ENCODE measurements at regions of chr1 and their contacts with region 1.

Region 1: DNA sequence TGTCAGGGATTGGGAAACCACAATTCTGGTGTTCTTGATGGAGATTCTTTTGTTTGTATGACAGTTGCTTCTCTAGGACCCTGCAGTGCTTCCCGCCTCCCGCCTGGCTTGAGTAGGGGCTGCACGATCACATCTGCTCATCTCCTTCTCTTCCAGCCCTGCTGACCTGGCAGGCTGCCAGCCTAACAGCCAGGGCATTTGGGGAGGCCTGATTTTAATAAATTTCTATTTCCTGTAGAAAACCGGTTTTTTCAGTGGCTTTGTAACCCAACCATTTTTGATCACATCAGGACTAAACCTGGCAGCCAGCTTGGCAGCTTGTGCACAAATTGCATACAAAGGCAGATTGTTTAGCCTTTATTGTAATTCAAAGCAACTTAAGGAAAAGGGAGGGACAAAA is 78.9 kb downstream of the UBE2U start:
- DNase-seq: no peak
- ATAC-seq: no peak
- H3K4me3 ChIP-seq: no peak overlapping the region
- H3K4me3 Mint-ChIP-seq: no peak overlapping the region
- H3K27ac ChIP-seq: no peak overlapping the region
- H3K27ac Mint-ChIP-seq: no peak overlapping the region
- H3K4me1 ChIP-seq: no peaks in the 10 kb centered on the region
- H3K4me1 Mint-ChIP-seq: no peaks in the 10 kb centered on the region
- H3K27me3 ChIP-seq: peaks cover 0 to 3% of the 10 kb centered on the region in 2 experiments
- H3K27me3 Mint-ChIP-seq: no peaks in the 10 kb centered on the region
- CTCF ChIP-seq: no peak

Region 2: GRCh38 chr1:63968663-63969440 is 313.5 kb before region 1 on chr1:
- CTCF ChIA-PET with region 1: no interaction called
- POLR2A ChIA-PET with region 1: no interaction called
- intact Hi-C with region 1: no loop called
- DNase-seq: no peak
- ATAC-seq: no peak
- H3K4me3 ChIP-seq: no peak overlapping the region
- H3K4me3 Mint-ChIP-seq: no peak overlapping the region
- H3K27ac ChIP-seq: no peak overlapping the region
- H3K27ac Mint-ChIP-seq: no peak overlapping the region
- H3K4me1 ChIP-seq: no peaks in the 10 kb centered on the region
- H3K4me1 Mint-ChIP-seq: no peaks in the 10 kb centered on the region
- H3K27me3 ChIP-seq: no peaks in the 10 kb centered on the region
- H3K27me3 Mint-ChIP-seq: peaks cover 4% of the 10 kb centered on the region
- CTCF ChIP-seq: no peak

Region 3: DNA sequence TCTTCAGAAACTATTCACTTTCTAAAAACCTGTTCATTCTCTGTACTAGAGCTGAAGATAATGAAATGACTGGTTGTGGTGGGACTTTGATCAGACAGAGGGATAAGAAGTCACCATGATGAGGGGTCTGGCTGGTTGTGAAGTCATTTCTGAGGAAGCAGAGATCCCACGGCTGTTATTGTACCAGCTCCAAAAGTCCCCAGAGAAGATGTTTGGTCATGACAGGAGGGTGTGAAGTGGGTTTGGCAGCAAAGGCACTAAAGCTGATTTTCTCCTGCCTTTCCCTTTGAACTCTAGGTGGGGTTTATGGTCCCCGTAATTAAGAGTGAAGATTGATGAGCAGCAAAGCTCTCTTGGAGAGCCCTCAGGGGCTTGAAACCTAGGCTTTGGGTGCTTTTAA is 84.5 kb after region 1 on chr1:
- CTCF ChIA-PET with region 1: no interaction called
- POLR2A ChIA-PET with region 1: no interaction called
- intact Hi-C with region 1: loop called (anchors 2 to 5 kb)
- DNase-seq: no peak
- ATAC-seq: no peak
- H3K4me3 ChIP-seq: no peak overlapping the region
- H3K4me3 Mint-ChIP-seq: no peak overlapping the region
- H3K27ac ChIP-seq: no peak overlapping the region
- H3K27ac Mint-ChIP-seq: no peak overlapping the region
- H3K4me1 ChIP-seq: no peaks in the 10 kb centered on the region
- H3K4me1 Mint-ChIP-seq: no peaks in the 10 kb centered on the region
- H3K27me3 ChIP-seq: no peaks in the 10 kb centered on the region
- H3K27me3 Mint-ChIP-seq: no peaks in the 10 kb centered on the region
- CTCF ChIP-seq: no peak

Region 4: DNA sequence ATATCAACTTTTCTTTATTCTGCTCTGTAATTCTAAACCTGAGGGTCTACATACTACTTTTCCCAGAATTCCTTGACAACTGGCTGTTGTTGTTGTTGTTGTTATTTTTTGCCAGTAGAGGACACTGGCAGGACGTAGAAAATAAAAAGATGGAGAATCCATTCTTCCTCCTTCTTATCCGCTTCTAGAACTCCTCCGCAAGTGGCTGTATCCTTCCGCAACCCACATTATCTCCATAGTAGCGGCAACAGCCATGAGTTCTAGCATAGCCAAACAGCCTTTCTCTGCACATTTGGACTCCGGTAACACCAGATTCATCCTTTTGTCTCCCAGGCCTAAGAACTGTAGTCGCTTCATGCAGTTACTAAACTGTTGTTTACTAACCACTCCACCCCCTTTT is 96.5 kb after region 1 on chr1:
- CTCF ChIA-PET with region 1: no interaction called
- POLR2A ChIA-PET with region 1: no interaction called
- intact Hi-C with region 1: loop called in 1 of 2 experiments (anchors 5 kb)
- DNase-seq: no peak
- ATAC-seq: no peak
- H3K4me3 ChIP-seq: no peak overlapping the region
- H3K4me3 Mint-ChIP-seq: no peak overlapping the region
- H3K27ac ChIP-seq: no peak overlapping the region
- H3K27ac Mint-ChIP-seq: no peak overlapping the region
- H3K4me1 ChIP-seq: no peaks in the 10 kb centered on the region
- H3K4me1 Mint-ChIP-seq: no peaks in the 10 kb centered on the region
- H3K27me3 ChIP-seq: peaks cover 0 to 10% of the 10 kb centered on the region in 2 experiments
- H3K27me3 Mint-ChIP-seq: peaks cover 7% of the 10 kb centered on the region
- CTCF ChIP-seq: no peak

Region 5: DNA sequence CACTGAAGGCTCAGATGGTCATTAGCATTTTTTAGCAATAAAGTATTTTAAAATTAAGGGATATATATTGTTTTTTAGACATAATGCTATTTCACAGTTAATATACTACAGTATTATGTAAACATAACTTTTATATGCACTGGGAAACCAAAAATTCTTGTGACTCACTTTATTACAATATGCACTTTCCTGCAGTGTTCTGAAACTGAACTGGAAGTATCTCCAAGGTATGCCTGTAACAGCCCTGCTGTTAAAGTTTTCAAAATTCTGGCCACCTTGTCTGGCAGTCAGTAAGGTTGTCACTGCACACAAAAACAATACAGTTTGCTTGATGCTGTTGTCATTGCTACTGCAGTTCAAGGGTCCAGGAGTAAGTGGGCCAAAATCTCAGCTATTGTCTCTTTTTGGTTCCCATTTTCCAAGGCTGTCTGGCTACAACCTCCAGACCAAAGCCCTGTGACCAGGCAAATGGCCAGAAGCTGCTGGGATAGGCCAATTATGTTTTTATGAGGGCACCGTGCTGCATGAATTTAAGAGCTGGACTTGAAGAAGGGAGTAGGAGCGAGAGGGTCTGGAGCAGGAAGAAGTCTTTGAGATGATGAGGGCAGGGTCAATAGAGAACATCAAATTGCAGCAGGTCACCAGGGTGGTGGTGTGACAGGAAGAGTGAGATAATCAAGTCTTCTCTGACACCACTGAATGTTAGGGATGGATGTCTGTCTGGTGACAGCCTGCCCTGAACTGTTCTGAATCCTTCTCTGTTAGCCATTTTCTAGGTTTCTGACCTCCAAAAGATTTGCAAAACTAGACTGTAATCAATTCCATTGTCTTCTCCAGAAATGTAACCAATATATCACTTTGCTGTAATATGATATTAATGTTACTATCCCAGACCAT is 105.3 kb after region 1 on chr1:
- CTCF ChIA-PET with region 1: no interaction called
- POLR2A ChIA-PET with region 1: no interaction called
- intact Hi-C with region 1: loop called (anchors 5 kb)
- DNase-seq: no peak
- ATAC-seq: no peak
- H3K4me3 ChIP-seq: no peak overlapping the region
- H3K4me3 Mint-ChIP-seq: no peak overlapping the region
- H3K27ac ChIP-seq: no peak overlapping the region
- H3K27ac Mint-ChIP-seq: no peak overlapping the region
- H3K4me1 ChIP-seq: no peaks in the 10 kb centered on the region
- H3K4me1 Mint-ChIP-seq: no peaks in the 10 kb centered on the region
- H3K27me3 ChIP-seq: no peaks in the 10 kb centered on the region
- H3K27me3 Mint-ChIP-seq: peaks cover 18% of the 10 kb centered on the region
- CTCF ChIP-seq: no peak

Region 6: GRCh38 chr1:64809309-64809708 is 527.0 kb after region 1 on chr1:
- CTCF ChIA-PET with region 1: no interaction called
- POLR2A ChIA-PET with region 1: no interaction called
- intact Hi-C with region 1: loop called in 1 of 2 experiments (anchors 5 kb)
- DNase-seq: no peak
- ATAC-seq: no peak
- H3K4me3 ChIP-seq: no peak overlapping the region
- H3K4me3 Mint-ChIP-seq: no peak overlapping the region
- H3K27ac ChIP-seq: no peak overlapping the region
- H3K27ac Mint-ChIP-seq: no peak overlapping the region
- H3K4me1 ChIP-seq: no peaks in the 10 kb centered on the region
- H3K4me1 Mint-ChIP-seq: no peaks in the 10 kb centered on the region
- H3K27me3 ChIP-seq: no peaks in the 10 kb centered on the region
- H3K27me3 Mint-ChIP-seq: no peaks in the 10 kb centered on the region
- CTCF ChIP-seq: no peak